Spleen (tissue), 13 donors: ENCODE measurements at regions of chr1 and their contacts with region 1.

Region 1: DNA sequence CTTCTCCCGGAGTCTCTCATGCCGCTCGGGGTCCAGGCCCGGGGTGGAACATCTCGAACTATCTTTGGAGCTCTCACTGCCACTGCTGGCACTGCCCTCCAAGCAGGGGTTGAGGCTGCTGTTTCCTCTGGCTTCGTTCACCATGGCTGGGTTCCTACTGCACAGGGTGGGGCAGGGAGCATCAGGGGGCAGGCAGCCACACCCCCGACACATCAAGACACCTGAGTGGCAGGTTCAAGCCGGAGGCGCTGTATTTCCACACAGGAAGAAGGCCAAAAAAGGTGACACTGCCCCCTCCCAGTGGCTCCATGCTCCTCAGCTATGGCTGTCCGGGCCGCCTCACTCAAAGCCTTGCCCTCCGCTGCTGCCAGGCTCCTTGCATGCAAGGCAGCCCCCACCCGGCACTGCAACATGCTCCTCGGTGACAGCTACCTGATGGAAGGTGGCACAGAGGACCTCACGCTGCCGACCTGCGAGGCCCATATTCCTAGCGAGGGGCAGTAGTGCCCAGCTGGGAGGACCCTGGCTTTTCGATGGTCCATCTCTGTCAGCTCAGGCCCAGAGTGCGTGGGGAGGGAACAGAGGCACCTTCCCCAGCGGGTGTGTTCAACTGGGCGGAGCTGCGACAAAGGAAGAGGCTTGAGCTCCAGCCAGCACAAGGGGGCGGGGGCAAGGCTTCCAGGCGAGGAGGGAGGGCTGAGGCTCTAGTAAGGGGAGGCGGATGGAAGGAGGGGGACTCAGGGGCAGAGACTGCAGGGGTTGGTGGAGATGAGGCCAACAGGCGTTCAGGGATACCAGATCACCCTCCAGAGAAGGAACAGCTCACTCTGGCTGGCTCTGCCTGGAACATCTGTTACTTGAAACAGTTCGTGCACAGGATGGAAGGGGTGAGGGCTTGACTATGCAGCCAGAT is 2.5 kb downstream of the MTHFR start:
- DNase-seq: peak; percentile 97
- H3K4me3 ChIP-seq: peak overlapping the region; percentile 36 to 97 (median 74)
- H3K27ac ChIP-seq: peak overlapping the region; percentile 30 to 98 (median 97)
- H3K4me1 ChIP-seq: peaks cover 49 to 93% (median 76%) of the 10 kb centered on the region in 6 donors
- H3K27me3 ChIP-seq: no peaks in the 10 kb centered on the region
- CTCF ChIP-seq: peak in 3 of 11 experiments; percentile 12 to 24 (median 16)
- POLR2A ChIP-seq: peak in 1 of 3 donors; percentile 40

Region 2: GRCh38 chr1:11731691-11732283 is 71.4 kb before region 1 on chr1:
- intact Hi-C with region 1: loop called (anchors 5 kb)
- DNase-seq: peak; percentile 85
- H3K4me3 ChIP-seq: peak overlapping the region in 6 of 8 donors; percentile 7 to 63 (median 16)
- H3K27ac ChIP-seq: peak overlapping the region; percentile 55 to 100 (median 86)
- H3K4me1 ChIP-seq: peaks cover 41 to 99% (median 65%) of the 10 kb centered on the region in 6 donors
- H3K27me3 ChIP-seq: peaks cover 0 to under 1% (median 0%) of the 10 kb centered on the region in 7 donors
- CTCF ChIP-seq: no peak
- POLR2A ChIP-seq: no peak